ENCODE measurements at regions of chr18 and their contacts with region 1.

Region 1: DNA sequence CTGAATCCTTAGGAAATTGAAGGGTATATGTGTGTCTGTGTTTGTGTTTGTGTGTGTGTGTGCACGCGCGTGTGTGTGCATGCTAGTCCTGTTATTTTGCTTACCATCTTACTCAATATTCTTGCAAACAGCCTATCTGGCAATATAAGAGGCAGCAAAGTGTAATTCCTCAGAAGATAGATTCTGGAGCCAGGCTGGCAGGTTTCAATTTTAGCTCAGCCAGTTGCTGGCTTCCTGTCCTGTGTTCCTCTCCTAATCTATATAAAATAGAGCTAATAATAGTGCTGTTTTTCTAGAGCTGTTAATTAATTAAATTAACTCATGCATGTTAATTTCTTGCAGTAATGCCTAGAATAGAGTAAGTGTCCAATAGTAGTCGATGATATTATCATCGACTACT is 256.2 kb downstream of the PIK3C3 start:
- DNase-seq: no peak
- ATAC-seq: no peak
- H3K4me3 ChIP-seq: no peak overlapping the region
- H3K27ac ChIP-seq: no peak overlapping the region
- H3K4me1 ChIP-seq: no peaks in the 10 kb centered on the region
- H3K27me3 ChIP-seq: no peaks in the 10 kb centered on the region

Region 2: DNA sequence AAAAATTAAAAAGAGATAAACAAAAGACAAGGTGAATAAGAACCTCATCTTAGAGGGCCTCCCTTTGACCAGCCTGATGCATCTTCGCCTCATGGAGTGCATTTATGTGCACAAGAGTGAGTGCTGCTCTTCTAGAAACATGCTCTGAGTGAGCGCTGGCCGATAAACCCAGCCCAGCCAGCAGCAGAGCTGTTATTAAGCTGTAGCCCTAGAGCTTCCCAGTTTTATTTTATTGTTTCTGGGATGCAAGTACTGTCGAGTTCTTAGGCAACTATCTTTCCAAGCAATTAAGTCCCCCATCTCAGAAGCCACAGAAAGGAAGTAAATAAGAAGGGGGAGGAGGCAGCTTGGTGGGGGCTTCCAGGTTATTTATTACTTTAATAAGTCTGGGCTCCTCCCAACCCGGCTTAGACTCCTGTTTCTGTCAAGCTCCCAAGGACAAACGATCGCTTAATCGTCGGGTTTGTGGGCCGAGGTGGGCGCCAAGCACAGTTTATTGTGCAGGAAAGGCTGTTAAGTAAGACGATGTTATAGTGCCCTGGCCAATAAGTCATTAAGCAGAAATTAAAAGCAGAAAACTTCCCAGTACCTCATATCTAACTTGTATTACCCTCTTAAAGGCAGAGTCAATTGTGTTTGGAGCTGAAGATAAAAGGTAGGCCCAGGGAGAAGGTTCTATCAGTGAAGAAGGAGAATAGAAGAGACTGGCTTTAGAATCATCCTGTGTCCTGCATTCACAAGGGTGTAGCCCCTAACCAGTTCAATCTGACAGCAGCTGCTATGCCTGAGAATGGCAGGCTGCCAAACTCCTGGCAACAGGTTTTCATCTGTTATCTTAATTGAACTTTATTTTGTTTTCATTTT is 79.9 kb before region 1 on chr18:
- intact Hi-C with region 1: no loop called
- DNase-seq: no peak
- ATAC-seq: no peak
- H3K4me3 ChIP-seq: no peak overlapping the region
- H3K27ac ChIP-seq: no peak overlapping the region
- H3K4me1 ChIP-seq: no peaks in the 10 kb centered on the region
- H3K27me3 ChIP-seq: no peaks in the 10 kb centered on the region

Region 3: GRCh38 chr18:42157878-42158277 is 53.3 kb before region 1 on chr18:
- intact Hi-C with region 1: loop called in 1 of 2 experiments (anchors 2 kb)
- DNase-seq: no peak
- ATAC-seq: no peak
- H3K4me3 ChIP-seq: no peak overlapping the region
- H3K27ac ChIP-seq: no peak overlapping the region
- H3K4me1 ChIP-seq: peaks cover 3 to 6% of the 10 kb centered on the region in 2 donors
- H3K27me3 ChIP-seq: no peaks in the 10 kb centered on the region

Measured in aorta (tissue), 5 donors.